Gastrocnemius medialis (tissue), 4 donors: ENCODE measurements at regions of chr3 and their contacts with region 1.

Region 1: GRCh38 chr3:193564012-193564411 is 9.3 kb upstream of the ATP13A4 start:
- DNase-seq: no peak
- ATAC-seq: no peak
- H3K4me3 ChIP-seq: no peak overlapping the region
- H3K27ac ChIP-seq: no peak overlapping the region
- H3K4me1 ChIP-seq: no peaks in the 10 kb centered on the region
- H3K27me3 ChIP-seq: no peaks in the 10 kb centered on the region
- CTCF ChIP-seq: no peak
- POLR2A ChIP-seq: no peak

Region 2: DNA sequence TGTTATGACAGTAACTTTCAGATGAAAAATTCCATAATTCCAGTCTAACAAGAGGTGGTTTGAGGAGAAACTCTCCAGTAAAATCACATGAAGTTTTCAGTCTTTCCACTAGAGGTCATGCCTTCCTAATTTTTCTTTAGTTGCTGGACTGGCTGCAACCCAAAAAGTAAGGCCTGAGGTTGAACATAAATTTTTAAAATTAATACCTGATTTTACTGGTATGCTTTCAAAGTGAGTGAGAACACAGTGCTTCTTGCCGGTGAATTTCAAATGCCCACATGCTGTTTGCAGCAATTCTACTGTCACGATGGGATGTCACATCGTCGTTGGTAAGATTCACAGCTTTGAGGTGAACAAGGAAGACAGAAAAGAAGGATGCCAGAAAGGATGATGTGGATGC is 747.7 kb before region 1 on chr3:
- in situ Hi-C with region 1: loop called in 1 of 4 experiments (anchors 10 kb)
- intact Hi-C with region 1: no loop called
- DNase-seq: no peak
- ATAC-seq: peak in 1 of 2 donors; percentile 45
- H3K4me3 ChIP-seq: no peak overlapping the region
- H3K27ac ChIP-seq: no peak overlapping the region
- H3K4me1 ChIP-seq: peaks cover 4 to 16% of the 10 kb centered on the region in 2 donors
- H3K27me3 ChIP-seq: no peaks in the 10 kb centered on the region
- CTCF ChIP-seq: peak; percentile 58 to 76 (median 73)
- POLR2A ChIP-seq: no peak

Region 3: GRCh38 chr3:192943393-192943792 is 620.6 kb before region 1 on chr3:
- in situ Hi-C with region 1: no loop called
- intact Hi-C with region 1: no loop called
- DNase-seq: no peak
- ATAC-seq: peak; percentile 58 to 65
- H3K4me3 ChIP-seq: no peak overlapping the region
- H3K27ac ChIP-seq: no peak overlapping the region
- H3K4me1 ChIP-seq: no peaks in the 10 kb centered on the region
- H3K27me3 ChIP-seq: no peaks in the 10 kb centered on the region
- CTCF ChIP-seq: no peak
- POLR2A ChIP-seq: no peak

Region 4: DNA sequence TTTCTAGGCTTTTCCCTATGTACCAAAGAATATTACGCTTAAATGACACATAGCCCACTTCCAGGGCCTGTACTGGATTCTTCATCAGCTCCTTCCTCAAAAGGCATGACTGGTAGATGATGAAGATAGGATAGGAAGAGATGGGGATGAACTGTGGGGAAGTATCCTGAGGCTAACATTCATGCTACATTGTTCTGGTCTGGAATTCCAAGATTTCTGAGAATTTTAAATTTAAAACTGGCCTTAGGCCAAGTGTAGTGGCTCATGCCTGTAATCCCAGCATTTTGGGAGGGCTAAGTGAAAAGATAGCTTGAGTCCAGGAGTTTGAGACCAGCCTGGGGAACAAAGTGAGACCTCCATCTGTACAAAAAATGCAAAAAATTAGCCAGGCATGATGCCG is 483.2 kb before region 1 on chr3:
- in situ Hi-C with region 1: loop called in 1 of 4 experiments (anchors 10 kb)
- intact Hi-C with region 1: no loop called
- DNase-seq: no peak
- ATAC-seq: no peak
- H3K4me3 ChIP-seq: no peak overlapping the region
- H3K27ac ChIP-seq: no peak overlapping the region
- H3K4me1 ChIP-seq: no peaks in the 10 kb centered on the region
- H3K27me3 ChIP-seq: no peaks in the 10 kb centered on the region
- CTCF ChIP-seq: no peak
- POLR2A ChIP-seq: no peak

Region 5: GRCh38 chr3:193190146-193190786 is 373.7 kb before region 1 on chr3:
- in situ Hi-C with region 1: loop called in 2 of 4 experiments (anchors 10 to 25 kb)
- intact Hi-C with region 1: no loop called
- DNase-seq: peak in 1 of 2 donors; percentile 26
- ATAC-seq: peak; percentile 58 to 95
- H3K4me3 ChIP-seq: no peak overlapping the region
- H3K27ac ChIP-seq: no peak overlapping the region
- H3K4me1 ChIP-seq: peaks cover 0 to 5% of the 10 kb centered on the region in 2 donors
- H3K27me3 ChIP-seq: no peaks in the 10 kb centered on the region
- CTCF ChIP-seq: peak; percentile 32 to 55 (median 37)
- POLR2A ChIP-seq: no peak

Region 6: DNA sequence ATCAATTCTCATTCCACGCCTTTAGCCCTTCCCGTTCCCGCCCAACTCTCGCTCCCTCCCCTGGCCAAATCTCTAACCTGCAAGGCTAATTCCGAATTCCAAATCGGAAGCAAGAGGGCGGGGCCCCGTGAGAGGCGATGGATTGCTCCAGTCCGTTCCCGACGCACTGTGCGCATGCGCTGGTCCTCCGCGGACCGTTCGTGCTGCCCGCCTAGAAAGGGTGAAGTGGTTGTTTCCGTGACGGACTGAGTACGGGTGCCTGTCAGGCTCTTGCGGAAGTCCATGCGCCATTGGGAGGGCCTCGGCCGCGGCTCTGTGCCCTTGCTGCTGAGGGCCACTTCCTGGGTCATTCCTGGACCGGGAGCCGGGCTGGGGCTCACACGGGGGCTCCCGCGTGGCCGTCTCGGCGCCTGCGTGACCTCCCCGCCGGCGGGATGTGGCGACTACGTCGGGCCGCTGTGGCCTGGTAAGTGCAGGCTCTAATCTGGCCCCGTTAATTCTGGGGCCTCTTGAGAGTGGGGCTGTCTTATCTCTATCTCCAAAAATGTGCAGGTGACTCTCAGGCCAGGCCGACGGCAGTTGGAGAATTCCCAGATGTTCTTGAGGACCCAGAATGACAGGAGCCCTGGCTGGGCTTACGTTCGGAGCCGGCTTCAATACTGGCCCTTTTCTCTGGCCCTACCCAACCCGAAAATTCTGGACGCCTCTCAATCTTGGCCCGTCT is 29.1 kb after region 1 on chr3 and contains the start of gene OPA1:
- in situ Hi-C with region 1: no loop called
- intact Hi-C with region 1: no loop called
- DNase-seq: peak; percentile 95 to 97
- ATAC-seq: peak; percentile 96 to 97
- H3K4me3 ChIP-seq: peak within 1 kb of the TSS; percentile 87 to 98 (median 96)
- H3K27ac ChIP-seq: peak within 1 kb of the TSS; percentile 94 to 95 (median 95)
- H3K4me1 ChIP-seq: peaks cover 22% of the 10 kb centered on the region in 2 donors
- H3K27me3 ChIP-seq: no peaks in the 10 kb centered on the region
- CTCF ChIP-seq: peak in 4 of 5 experiments; percentile 27 to 49 (median 32)
- POLR2A ChIP-seq: peak; percentile 60 to 73
- total RNA-seq, gene OPA1: 59.8 to 78.2 (median 72.2) TPM